AG04450 (cell line): ENCODE measurements at regions of chr9 and their contacts with region 1.

Region 1: DNA sequence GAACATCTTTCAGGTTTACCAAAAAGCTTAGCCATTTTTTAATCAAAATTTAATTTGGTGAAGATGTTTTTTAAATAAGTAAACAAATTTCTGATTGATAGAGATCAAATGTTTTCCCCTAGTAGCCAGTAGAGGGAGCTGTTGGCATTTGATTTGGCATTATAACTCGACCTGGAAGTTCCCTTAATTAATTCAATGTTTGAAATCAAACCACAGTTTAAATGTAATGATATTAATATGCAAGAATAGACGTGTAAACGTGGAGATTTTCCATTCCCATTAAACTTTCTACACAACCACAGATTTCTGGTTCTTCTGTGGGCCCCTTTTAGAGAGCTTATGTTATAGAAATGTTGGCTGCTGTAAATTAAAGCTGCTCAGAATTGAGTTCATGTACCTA is 148.1 kb upstream of the MPDZ start:
- DNase-seq: peak; percentile 15
- H3K4me3 ChIP-seq: no peak overlapping the region
- H3K27ac ChIP-seq: no peak overlapping the region
- H3K27me3 ChIP-seq: no peaks in the 10 kb centered on the region
- CTCF ChIP-seq: peak; percentile 56

Region 2: DNA sequence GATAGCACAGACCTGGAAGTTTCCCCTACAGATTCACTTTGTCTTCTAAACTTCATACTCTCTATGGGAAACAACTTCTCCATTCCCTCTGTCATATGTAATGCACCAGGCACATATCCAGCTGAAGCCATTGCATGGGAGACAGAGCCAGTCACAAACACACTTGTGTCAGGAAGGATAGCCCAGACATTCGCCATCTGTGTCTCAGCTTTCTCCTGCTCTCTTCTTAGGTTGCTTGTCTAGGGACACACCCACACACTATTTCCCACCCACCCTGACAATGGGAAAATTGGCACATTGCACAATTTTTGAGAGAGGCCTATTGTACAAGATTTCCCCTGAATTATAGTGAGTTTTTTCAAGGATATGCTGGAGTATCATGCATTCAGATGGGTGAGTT is 10.3 kb after region 1 on chr9:
- CTCF ChIA-PET with region 1: interaction called, 40 read pairs
- POLR2A ChIA-PET with region 1: no interaction called
- DNase-seq: no peak
- H3K4me3 ChIP-seq: no peak overlapping the region
- H3K27ac ChIP-seq: no peak overlapping the region
- H3K27me3 ChIP-seq: no peaks in the 10 kb centered on the region
- CTCF ChIP-seq: no peak

Region 3: GRCh38 chr9:13457795-13458194 is 30.2 kb after region 1 on chr9:
- CTCF ChIA-PET with region 1: no interaction called
- POLR2A ChIA-PET with region 1: no interaction called
- DNase-seq: no peak
- H3K4me3 ChIP-seq: no peak overlapping the region
- H3K27ac ChIP-seq: no peak overlapping the region
- H3K27me3 ChIP-seq: no peaks in the 10 kb centered on the region
- CTCF ChIP-seq: no peak

Region 4: DNA sequence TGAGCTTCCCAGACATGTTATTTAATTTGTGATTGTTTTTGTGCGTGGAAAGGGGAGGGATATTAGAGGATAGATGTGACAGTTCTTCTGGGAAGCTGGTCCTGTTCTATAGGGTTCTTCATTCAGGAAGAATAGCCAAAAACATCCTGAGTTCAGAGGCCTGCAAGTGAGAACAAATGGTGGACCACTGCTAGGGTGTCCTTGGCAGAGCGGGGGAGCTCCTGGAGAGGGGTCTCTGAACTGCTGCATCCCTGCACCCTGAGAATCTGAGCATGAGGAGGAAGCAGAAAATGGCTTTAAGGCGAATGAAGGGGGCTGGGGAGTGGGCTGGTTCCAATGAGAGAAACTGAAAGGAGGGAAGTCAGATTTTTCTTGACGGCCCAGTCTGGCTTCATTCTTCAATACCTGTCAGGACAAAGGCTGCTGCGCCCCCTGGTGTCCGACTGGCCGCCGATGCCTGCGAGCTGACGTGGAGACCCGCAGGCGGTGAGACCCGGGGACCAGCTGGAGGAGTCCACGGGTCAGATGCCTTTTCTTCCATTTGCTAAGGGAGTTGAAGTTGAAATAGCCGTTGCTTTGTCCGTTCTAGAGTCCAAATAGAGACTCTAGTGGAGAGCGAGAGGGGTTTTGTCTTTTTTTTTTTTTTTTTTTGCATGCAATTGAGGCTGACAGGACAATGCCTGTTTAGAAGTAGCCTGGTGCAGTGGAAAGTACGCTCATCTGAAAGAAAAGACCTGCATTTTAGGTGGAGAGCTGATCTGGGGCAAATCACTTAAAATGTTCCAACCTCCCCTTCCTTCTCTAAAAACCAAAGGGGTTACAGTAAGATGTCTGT is 925.9 kb after region 1 on chr9:
- CTCF ChIA-PET with region 1: interaction called, 39 read pairs
- POLR2A ChIA-PET with region 1: no interaction called
- DNase-seq: peak; percentile 30
- H3K4me3 ChIP-seq: no peak overlapping the region
- H3K27ac ChIP-seq: no peak overlapping the region
- H3K27me3 ChIP-seq: peaks cover 65% of the 10 kb centered on the region
- CTCF ChIP-seq: peak; percentile 94

Region 5: DNA sequence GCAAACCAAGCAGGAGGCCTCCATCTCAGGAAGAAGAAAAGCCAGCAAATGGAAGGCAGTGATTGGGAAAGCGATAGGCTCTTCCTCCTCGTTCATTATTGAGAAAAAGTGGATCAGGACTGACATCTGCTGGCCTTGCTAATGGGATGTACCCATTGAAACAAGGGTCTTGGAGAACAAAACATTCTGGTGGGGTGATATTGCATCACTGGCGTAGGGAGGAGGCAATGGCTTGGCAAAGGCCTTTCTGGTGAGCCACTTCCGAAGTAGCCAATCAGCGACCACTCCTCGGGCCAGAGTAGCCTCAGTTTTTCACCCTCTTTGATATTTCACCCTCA is 973.0 kb after region 1 on chr9:
- CTCF ChIA-PET with region 1: interaction called, 21 read pairs
- POLR2A ChIA-PET with region 1: no interaction called
- DNase-seq: peak; percentile 34
- H3K4me3 ChIP-seq: no peak overlapping the region
- H3K27ac ChIP-seq: no peak overlapping the region
- H3K27me3 ChIP-seq: peaks cover 53% of the 10 kb centered on the region
- CTCF ChIP-seq: peak; percentile 53